Mammary epithelial cell (primary cell): ENCODE measurements at regions of chr18 and their contacts with region 1.

Region 1: DNA sequence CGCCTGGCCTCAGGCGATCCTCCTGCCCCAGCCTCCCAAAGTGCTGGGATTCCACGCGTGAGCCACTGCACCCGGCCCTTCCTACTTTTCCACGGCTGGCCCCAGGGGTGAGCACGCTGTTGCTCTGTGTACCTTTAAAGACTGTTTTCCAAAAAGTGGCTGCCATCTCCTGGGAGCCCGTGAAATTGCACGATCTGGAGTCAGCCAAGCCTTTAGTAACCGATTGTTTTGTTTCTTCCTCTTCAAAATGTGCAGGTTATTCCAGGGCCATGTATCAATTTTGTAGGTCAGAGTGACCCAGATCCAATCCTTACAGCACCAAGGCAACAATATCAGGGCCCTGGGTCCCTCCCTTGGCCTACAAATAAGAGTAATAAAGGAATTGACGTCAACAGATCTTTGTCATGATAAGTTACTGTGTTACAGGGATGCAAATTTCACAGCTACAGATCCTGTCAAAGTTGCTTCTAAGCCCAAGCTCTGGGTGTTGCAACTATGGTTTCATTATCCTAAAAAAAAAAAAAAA is 135.6 kb upstream of the ZNF236 start:
- DNase-seq: peak; percentile 63
- H3K4me3 ChIP-seq: no peak overlapping the region
- H3K27ac ChIP-seq: peak overlapping the region; percentile 87
- H3K4me1 ChIP-seq: peaks cover 28% of the 10 kb centered on the region
- H3K27me3 ChIP-seq: no peaks in the 10 kb centered on the region
- CTCF ChIP-seq: peak; percentile 61 to 75

Region 2: DNA sequence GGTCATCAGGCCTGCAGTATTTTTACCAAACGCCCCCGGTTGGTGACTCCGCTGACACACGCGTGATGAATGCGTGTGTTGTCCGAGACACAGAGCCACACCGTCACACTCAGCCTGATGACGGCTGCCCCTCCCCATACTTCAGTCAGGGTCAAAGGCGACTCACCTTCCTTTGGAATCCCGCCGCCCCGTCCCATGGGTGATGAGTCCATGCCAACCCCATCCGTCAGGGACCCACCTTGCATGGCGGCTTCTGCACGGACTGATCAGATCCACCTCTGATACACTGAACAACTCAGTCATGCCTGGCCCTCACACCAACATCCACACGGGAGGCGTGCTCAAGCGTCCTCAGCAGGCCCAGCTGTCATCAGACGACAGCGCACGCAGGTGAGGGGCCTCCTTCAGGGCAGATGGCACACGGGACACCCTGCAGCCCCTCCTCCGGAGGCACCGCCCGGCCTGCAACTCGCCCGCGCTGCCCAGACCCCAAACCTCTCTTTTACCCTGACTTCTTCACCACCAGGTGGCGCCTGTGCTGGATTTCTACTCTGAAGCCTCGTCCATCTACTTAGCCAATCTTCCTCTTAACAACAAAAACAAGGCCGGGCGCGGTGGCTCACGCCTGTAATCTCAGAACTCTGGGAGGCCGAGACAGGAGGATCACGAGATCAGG is 281.0 kb before region 1 on chr18:
- CTCF ChIA-PET with region 1: no interaction called
- dilution Hi-C with region 1: no loop called
- in situ Hi-C with region 1: loop called in 1 of 2 experiments (anchors 10 kb)
- intact Hi-C with region 1: no loop called
- DNase-seq: peak; percentile 27
- H3K4me3 ChIP-seq: no peak overlapping the region
- H3K27ac ChIP-seq: no peak overlapping the region
- H3K4me1 ChIP-seq: no peaks in the 10 kb centered on the region
- H3K27me3 ChIP-seq: no peaks in the 10 kb centered on the region
- CTCF ChIP-seq: peak; percentile 46 to 67

Region 3: GRCh38 chr18:76450452-76451395 is 236.1 kb before region 1 on chr18:
- CTCF ChIA-PET with region 1: no interaction called
- dilution Hi-C with region 1: no loop called
- in situ Hi-C with region 1: no loop called
- intact Hi-C with region 1: loop called (anchors 5 kb)
- DNase-seq: peak; percentile 65
- H3K4me3 ChIP-seq: peak overlapping the region; percentile 52 to 62 (median 52)
- H3K27ac ChIP-seq: peak overlapping the region; percentile 77
- H3K4me1 ChIP-seq: peaks cover 30% of the 10 kb centered on the region
- H3K27me3 ChIP-seq: no peaks in the 10 kb centered on the region
- CTCF ChIP-seq: no peak

Region 4: DNA sequence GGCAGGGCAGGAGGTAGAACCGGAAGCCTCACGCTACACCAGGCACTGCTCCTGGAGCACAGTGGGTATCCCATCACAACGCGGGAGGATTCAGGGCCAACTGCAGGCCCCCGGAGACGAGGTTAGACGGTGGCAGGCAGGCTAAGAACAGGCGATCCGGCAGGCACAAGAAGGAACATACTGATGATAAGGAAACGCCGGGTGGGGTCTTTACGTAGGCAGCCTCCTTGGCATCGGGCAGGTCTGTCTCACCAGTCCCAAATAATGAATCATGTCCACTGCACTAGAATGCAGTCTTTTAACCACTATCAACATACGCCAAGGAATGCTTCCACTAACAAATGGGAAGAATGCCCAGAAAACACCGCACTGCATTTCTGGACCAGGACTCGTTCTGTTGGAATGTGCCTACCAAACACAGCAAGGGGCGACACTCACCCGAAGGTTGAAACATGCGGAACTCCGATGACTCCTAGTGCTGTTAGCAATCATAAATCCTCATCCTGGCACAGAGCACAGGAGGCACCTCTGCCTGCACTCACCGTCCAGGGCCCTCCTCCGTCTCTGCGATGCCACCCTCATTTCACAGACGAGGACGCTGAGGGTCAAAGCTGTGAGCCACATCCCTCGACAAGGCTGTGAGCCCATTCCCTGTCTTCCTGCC is 227.0 kb before region 1 on chr18:
- CTCF ChIA-PET with region 1: no interaction called
- dilution Hi-C with region 1: no loop called
- in situ Hi-C with region 1: no loop called
- intact Hi-C with region 1: loop called (anchors 1 kb)
- DNase-seq: peak; percentile 99
- H3K4me3 ChIP-seq: peak overlapping the region; percentile 1 to 23 (median 18)
- H3K27ac ChIP-seq: peak overlapping the region; percentile 89
- H3K4me1 ChIP-seq: peaks cover 26% of the 10 kb centered on the region
- H3K27me3 ChIP-seq: no peaks in the 10 kb centered on the region
- CTCF ChIP-seq: peak in 1 of 2 donors; percentile 37

Region 5: GRCh38 chr18:76838182-76838581 is 151.4 kb after region 1 on chr18:
- CTCF ChIA-PET with region 1: no interaction called
- dilution Hi-C with region 1: no loop called
- in situ Hi-C with region 1: no loop called
- intact Hi-C with region 1: no loop called
- DNase-seq: no peak
- H3K4me3 ChIP-seq: no peak overlapping the region
- H3K27ac ChIP-seq: no peak overlapping the region
- H3K4me1 ChIP-seq: no peaks in the 10 kb centered on the region
- H3K27me3 ChIP-seq: no peaks in the 10 kb centered on the region
- CTCF ChIP-seq: no peak